Caco-2 (cell line): ENCODE measurements at regions of chr7 and their contacts with region 1.

Region 1: GRCh38 chr7:133853706-133854276 is 273.3 kb upstream of the LRGUK start:
- DNase-seq: peak; percentile 49 to 60
- H3K4me3 ChIP-seq: no peak overlapping the region
- H3K4me3 Mint-ChIP-seq: no peak overlapping the region
- H3K27ac Mint-ChIP-seq: no peak overlapping the region
- H3K4me1 ChIP-seq: no peaks in the 10 kb centered on the region
- H3K4me1 Mint-ChIP-seq: peaks cover 10% of the 10 kb centered on the region
- H3K27me3 ChIP-seq: no peaks in the 10 kb centered on the region
- H3K27me3 Mint-ChIP-seq: no peaks in the 10 kb centered on the region
- CTCF ChIP-seq: peak; percentile 66 to 77

Region 2: DNA sequence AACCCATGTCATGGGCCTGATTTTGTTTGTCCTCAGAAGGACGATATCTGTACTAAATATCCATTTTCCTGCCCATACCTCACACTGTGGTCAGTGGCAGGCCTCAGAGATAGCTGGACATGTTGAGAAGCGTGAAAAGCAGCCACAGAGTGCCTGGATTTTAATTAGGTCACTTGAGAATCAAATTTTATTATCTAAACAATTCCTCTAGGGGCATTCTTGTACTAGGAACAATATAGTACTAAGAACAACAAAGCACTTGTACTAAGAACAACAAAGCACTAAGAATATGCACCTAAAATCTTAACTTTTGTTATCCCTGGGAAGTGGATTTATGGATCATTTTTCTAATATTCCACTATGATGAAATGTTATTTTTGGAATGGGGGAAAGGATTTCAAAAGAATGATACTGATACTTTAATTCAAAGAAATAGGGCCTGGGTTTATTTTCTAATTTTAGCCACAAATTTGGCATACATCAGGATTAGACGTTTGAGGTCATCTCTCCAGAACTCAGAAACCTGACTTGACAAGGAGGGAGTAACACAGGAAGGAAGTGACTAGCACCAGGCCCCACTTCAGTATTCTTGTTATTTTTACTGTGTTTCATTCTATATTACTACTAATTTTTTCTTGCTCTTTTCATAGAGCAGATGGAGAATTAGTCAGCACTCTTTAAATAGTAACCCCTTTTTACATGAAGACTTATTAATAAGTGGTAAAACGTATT is 488.7 kb before region 1 on chr7:
- CTCF ChIA-PET with region 1: no interaction called
- POLR2A ChIA-PET with region 1: no interaction called
- intact Hi-C with region 1: no loop called
- DNase-seq: no peak
- H3K4me3 ChIP-seq: no peak overlapping the region
- H3K4me3 Mint-ChIP-seq: no peak overlapping the region
- H3K27ac Mint-ChIP-seq: no peak overlapping the region
- H3K4me1 ChIP-seq: no peaks in the 10 kb centered on the region
- H3K4me1 Mint-ChIP-seq: no peaks in the 10 kb centered on the region
- H3K27me3 ChIP-seq: no peaks in the 10 kb centered on the region
- H3K27me3 Mint-ChIP-seq: no peaks in the 10 kb centered on the region
- CTCF ChIP-seq: no peak

Region 3: DNA sequence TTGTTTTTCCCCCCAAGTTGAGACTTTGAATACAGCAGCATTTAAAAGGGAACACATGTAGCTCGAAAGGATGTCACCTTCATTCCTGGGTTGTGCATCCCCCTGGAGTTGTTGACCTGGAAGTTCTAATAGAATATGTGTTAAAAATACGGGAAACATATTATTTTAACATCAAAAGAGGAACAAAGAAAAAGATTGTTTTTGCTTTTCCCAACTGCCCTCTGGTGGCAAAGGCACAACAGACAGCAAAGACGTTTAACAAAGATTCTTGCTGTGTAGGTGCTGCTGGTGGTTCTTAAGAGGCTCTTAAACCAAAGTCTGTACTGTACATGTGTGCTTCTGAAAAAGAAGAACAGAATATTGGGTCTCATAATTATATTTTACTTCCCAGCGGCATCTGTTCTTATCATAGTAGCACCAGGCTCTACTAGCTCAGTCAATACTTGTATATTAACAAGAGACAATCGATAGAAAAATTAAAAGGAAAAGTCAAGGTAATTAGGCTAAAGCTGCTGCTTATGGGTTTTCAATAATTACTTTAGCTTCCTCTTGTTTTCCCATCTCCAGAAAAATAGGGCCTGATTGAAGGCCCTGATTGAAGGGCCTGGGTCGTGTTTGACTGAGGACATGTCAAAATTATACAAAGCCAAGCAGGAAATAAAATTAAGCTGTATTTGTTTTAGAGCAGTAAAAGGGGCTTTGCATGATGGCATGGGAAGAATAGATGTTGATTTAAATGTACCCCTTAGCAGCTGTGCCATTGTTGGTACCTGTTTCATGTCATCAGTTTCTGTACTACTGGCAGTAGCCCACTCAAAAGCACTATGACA is 110.9 kb before region 1 on chr7:
- CTCF ChIA-PET with region 1: no interaction called
- POLR2A ChIA-PET with region 1: no interaction called
- intact Hi-C with region 1: loop called (anchors 10 kb)
- DNase-seq: peak in 1 of 2 experiments; percentile 8
- H3K4me3 ChIP-seq: no peak overlapping the region
- H3K4me3 Mint-ChIP-seq: no peak overlapping the region
- H3K27ac Mint-ChIP-seq: no peak overlapping the region
- H3K4me1 ChIP-seq: peaks cover 12% of the 10 kb centered on the region
- H3K4me1 Mint-ChIP-seq: peaks cover 14% of the 10 kb centered on the region
- H3K27me3 ChIP-seq: no peaks in the 10 kb centered on the region
- H3K27me3 Mint-ChIP-seq: no peaks in the 10 kb centered on the region
- CTCF ChIP-seq: peak; percentile 38 to 53

Region 4: GRCh38 chr7:133985300-133985699 is 131.5 kb after region 1 on chr7:
- CTCF ChIA-PET with region 1: no interaction called
- POLR2A ChIA-PET with region 1: no interaction called
- intact Hi-C with region 1: loop called (anchors 2 kb)
- DNase-seq: no peak
- H3K4me3 ChIP-seq: no peak overlapping the region
- H3K4me3 Mint-ChIP-seq: no peak overlapping the region
- H3K27ac Mint-ChIP-seq: no peak overlapping the region
- H3K4me1 ChIP-seq: no peaks in the 10 kb centered on the region
- H3K4me1 Mint-ChIP-seq: no peaks in the 10 kb centered on the region
- H3K27me3 ChIP-seq: no peaks in the 10 kb centered on the region
- H3K27me3 Mint-ChIP-seq: no peaks in the 10 kb centered on the region
- CTCF ChIP-seq: no peak